ENCODE measurements at regions of chr18 and their contacts with region 1.

Region 1: DNA sequence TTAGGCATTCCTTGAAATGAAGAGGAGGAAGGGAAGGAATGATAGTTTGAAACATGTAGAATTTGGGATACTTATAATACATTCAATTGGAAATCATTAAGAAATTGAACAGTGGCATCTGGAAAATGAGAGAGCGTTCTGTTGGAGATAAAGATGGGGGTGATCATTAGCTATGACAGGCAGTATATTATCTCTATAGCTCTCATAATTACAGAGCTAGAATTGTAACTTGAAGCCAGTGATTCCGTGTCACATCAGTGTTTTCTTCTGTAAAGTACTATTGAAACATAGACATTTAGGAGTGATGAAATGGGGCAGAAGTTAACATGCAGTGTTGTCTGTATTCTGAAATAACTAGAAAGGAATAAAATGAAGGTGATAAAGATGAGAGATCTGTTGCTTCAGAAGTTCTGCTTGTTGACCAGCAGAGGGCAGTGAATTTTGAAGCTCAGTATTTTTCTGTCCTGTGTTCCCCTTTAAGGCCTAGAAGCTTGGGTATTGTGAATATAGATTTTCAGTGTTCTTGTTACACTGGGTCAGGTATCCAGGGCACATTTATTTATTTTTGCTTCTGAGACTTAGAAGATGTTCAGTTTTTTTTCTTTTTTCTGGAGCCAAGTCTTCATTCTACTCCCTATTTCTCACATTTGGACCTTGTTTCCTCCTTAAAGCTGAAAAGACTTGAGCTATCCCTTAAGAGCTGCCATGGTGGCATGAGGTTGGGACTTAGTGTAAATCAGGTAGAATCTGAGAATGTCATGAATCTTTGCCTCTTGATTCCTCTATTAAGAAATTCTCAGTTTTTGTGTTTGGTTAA is 157.4 kb downstream of the TAF4B start:
- DNase-seq: no peak

Region 2: DNA sequence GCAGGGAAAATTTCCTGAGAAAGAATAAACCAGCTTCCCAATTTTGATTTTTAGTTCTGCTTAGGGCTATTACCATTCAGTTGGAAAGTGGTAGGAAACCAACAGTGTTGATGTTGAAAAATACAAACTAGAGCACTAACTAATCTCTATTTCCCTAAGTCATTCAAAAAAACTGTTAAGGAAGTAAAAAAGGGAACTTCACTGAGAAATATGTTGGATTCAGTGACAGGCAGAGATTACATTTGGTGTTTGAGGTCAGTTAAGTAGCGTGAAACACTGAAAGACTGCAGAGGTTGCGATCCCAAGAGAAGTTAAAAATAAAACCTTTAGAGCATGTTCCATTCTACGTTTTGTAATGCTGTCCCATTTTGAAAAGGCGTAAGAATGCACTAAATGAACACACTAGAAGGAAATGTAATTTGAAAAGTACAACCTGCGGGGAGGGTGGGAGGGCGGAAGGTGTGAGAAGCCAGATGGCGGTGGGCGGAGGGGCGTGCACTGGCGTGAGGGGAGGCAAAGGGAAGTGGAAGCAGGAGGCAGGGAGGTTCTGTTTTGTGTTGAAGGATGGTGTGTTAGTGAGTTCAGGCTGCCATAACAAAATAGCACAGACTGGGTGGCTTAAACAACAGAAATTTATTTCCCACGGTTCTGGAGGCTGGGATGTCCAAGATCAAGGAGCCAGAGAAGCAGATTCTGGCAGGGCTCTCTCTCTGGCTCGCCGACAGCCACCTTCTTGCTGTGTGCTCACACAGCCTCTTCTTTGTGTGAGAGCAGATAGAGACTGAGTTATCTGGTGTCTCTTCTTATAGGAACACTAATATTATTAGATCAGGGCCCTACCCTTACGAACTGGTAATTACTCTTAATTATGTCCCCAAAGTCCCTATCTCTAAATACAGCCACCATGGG is 259.0 kb after region 1 on chr18:
- intact Hi-C with region 1: loop called in 1 of 2 experiments (anchors 10 kb)
- DNase-seq: no peak

Region 3: GRCh38 chr18:26656944-26657536 is 273.4 kb after region 1 on chr18:
- intact Hi-C with region 1: loop called in 1 of 2 experiments (anchors 10 kb)
- DNase-seq: peak; percentile 93

Region 4: DNA sequence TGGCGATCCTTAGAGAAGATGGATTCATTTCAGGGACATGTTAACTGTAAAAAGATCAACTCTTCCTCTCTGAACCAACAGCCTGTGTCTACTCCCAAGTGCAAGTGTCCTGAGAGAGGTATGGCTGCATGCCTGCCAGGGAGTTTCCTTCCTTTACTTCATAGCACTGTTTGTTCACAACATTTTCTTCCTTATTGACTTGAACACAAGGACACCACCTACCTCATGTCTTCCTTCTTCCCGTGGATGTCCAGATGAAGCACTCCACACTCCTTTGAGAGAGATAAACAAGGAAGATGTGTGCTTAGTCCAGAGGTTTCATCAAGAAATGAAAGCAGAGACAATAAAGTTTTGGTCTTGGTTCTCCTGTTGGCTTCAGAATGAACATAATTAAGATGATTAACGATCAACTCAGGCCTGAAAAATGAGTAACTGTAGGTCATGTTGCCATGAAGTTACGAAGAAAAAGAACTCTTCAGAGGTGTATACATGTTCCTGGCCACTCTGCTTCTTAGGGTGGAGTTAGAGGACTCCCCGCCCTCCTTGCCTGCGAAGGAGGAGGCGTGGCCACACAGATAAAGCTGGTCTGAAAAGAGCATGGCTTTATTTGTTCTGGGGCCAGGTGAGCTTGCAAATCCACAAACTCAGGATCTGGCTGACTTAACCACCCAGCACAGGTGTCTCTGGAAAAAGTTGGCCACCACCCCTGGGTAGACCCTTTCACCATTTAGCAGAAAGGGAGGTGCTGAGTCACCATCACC is 319.7 kb after region 1 on chr18:
- intact Hi-C with region 1: no loop called
- DNase-seq: no peak